PC-3 (cell line): ENCODE measurements at regions of chr3 and their contacts with region 1.

Region 1: DNA sequence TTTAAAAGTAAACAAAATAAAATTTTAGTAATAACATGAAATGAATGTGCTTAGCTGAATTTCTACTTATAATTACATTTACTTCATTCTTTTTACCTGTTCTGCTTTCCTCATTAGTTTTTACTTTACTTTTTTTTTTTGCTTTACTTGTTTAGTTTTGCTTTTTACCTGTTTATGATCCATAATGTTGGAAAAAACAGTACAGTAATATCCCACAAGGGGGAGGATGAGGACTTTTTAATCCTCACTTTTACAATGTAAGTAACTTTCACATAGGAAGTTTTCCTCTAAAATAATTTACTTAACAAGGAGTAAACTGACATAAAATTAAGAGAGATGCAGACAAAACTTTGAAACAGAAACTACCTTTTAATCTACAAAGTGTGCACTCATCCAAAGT is 268.7 kb downstream of the TBC1D5 start:
- DNase-seq: peak; percentile 40
- ATAC-seq: no peak
- H3K4me3 ChIP-seq: no peak overlapping the region
- H3K27ac ChIP-seq: no peak overlapping the region
- H3K4me1 ChIP-seq: peaks cover 8% of the 10 kb centered on the region; the same call in 1 of the 2 replicates
- H3K27me3 ChIP-seq: no peaks in the 10 kb centered on the region
- CTCF ChIP-seq: peak; percentile 66

Region 2: GRCh38 chr3:17686613-17687012 is 212.9 kb after region 1 on chr3:
- CTCF ChIA-PET with region 1: no interaction called
- POLR2A ChIA-PET with region 1: no interaction called
- intact Hi-C with region 1: loop called (anchors 2 kb)
- DNase-seq: peak; percentile 46
- ATAC-seq: peak; percentile 71
- H3K4me3 ChIP-seq: no peak overlapping the region
- H3K27ac ChIP-seq: no peak overlapping the region
- H3K4me1 ChIP-seq: no peaks in the 10 kb centered on the region
- H3K27me3 ChIP-seq: no peaks in the 10 kb centered on the region
- CTCF ChIP-seq: peak; percentile 59